HEK293 (cell line): ENCODE measurements at regions of chr15 and their contacts with region 1.

Region 1: DNA sequence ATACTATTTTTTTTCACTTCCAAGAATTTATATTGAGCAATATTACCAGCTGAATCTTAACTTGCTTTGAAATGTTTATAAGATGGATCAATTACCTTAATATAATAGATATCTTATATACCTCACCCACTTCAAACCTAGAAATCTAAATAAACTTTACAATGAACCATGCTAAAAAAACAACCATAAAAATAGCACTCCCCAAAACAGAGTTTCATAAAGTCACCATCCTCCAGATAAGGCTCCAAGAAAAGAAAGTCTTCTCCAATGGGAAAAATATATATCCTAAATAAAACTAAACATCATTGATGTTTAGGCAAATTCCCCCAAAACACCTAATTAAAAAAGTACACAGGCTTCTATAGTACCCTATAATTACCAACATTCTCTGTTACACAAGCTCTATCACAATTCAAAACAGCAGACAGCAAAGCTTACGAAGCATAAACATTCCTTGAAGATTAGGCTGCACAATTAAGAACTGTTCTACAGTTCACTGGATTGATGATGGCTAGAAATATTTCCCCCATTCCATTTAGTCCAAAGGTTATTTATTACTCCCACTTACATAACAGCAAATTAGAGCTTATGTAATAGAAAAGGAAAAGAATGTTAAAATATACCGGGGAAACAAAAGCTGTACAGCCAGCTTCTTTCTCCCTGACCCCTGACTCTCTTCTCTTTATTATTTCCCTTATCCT is 49.5 kb downstream of the UACA start:
- H3K4me3 ChIP-seq: no peak overlapping the region
- H3K27ac ChIP-seq: peak overlapping the region; percentile 45; the same call in 1 of the 2 replicates
- H3K4me1 ChIP-seq: peaks cover 49% of the 10 kb centered on the region
- CTCF ChIP-seq: no peak

Region 2: DNA sequence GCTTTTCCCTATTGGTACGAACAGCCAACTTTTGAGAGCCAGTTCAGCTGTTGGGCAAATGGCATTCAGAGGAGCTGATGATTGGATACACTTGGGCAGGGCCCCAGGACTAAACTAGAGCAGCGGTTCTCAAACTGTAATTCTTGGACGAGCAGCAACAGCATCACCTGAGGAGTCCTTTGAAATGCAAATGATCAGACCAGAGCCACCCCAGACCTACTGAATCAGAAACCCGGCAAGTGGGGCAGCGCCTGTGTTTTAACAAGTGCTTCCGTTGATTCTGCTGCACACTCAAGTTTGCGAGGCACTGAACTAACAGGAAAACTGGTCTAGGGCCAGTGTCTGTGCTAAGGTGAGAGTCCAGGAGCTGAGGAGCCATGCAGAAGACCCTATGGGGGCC is 190.2 kb before region 1 on chr15:
- CTCF ChIA-PET with region 1: no interaction called
- POLR2A ChIA-PET with region 1: no interaction called
- H3K4me3 ChIP-seq: no peak overlapping the region
- H3K27ac ChIP-seq: no peak overlapping the region
- H3K4me1 ChIP-seq: peaks cover 28% of the 10 kb centered on the region
- CTCF ChIP-seq: no peak

Region 3: DNA sequence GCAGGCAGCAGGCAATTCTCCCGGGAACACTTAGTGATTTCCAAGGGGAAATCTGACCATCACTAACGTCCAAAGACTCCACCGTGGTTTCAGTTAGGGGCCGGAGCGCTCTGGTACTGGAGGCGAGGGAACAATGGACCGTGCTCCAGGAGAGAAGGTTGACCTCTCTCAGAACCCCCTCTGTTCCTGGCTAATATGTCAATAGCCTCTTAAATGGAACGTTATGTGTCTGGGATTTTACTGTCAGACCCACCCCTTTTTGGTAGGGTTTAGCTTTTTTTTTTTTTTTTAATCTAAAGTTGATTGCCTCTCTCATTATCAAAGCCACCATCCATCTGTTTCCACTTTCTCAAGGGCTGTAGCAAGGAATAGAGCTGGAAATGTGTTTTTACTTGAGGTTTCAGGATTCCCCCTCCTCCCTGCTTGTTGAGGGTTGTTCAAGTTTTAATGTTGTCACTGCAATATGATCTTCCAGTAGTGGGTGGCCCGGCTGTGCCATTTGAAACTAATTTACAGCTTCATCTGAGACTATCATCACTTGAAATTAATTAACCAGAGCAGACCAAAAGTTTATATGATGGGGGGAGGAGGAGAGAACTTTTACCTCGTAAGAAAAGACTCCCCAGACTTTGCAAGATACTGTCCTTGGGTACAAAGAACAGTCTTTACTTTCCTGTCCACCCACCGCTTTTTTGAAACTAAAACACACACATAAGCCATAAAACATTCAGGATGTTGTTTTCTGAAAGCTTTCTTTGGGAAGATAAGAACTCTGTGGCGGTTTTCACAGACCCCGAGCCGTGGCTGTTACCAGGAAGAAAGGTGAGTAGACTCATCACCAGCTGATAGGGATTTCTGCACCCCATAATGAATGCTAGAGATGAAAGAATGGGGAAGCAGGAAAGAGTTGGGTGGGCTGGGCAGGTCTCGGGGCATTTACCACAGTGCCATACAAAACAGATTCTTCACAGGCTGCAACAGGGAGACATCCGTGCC is 138.3 kb before region 1 on chr15:
- CTCF ChIA-PET with region 1: no interaction called
- POLR2A ChIA-PET with region 1: no interaction called
- H3K4me3 ChIP-seq: no peak overlapping the region
- H3K27ac ChIP-seq: peak overlapping the region; percentile 71
- H3K4me1 ChIP-seq: peaks cover 21% of the 10 kb centered on the region
- CTCF ChIP-seq: no peak

Region 4: DNA sequence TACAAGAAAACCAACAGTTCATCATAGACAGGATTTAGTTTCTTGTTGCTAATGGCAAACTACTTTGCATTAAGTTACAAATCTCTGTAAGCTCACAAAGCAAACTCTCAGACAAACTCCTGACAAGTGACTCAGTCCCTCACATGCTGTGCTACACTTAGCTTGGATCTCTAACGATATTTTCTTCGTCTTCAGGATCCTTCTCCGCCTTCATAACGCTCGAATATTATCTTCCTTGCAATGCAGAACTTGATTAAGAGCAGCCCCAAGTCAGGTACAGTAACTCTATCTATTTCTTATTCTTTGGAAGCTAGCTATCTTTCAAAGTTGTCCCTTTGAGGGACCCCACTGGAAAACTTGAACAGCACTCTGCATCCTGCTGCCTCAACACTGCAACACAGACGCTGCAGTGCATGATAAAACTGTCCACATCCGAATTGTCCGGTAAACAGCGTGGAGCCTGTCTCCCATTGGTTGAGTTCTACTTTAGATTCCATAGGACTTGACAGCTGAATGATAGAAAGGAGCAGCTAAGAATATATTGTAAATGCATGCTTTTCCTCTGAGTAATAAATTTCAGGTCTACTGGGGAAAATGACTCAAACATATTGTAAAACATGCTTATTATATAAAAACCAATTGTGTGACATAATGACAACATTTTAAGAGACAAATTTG is 11.8 kb before region 1 on chr15:
- CTCF ChIA-PET with region 1: interaction called, 20 read pairs
- POLR2A ChIA-PET with region 1: interaction called, 8 read pairs
- H3K4me3 ChIP-seq: peak overlapping the region; percentile 38
- H3K27ac ChIP-seq: peak overlapping the region; percentile 32
- H3K4me1 ChIP-seq: peaks cover 56% of the 10 kb centered on the region
- CTCF ChIP-seq: no peak